ENCODE measurements at regions of chr19 and their contacts with region 1.

Region 1: DNA sequence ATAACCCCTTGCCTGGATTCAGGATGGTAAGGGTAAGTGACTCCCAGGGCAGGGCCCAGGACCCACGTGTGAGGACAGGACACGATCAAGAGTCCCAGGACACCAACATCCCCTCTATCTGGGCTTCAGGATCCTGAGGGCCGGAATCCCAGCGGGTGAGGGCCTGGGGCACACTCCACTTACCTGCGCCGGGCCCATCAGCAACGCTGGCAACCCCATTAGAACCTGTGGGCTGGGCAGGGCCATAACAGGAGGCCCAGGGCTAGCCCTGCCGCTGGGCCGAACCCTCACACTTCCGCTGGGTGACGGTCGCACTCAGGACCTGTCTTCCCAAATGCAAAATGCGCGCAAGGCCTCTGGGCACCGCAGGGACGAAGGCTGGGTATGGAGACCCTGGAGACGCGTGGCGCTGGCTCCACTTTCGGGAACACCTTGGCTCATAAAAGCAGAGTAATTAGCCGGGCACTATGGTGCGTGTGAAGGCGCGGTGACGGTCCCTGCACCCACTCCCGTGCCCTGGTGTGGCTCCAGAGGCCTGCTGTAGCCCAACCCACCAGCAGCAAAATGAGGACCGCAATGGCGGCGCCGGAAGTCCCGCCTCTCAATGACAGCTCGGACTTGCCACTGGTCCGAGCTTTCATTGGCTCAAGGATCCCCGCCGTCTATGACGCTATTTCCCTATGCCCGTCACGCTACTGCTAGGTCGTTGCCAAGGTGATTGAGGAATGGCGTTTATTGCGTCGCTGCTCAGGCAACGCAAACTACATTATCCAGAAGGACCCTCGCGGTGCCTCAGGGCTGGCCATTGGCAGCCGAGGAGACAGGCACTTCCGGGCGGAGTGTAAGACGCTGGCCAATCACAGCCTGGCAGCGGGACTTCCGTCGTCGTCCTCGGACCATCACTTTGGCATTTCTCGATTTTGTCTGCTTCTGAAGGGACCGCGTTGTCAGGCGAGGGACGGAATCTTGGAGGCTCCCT is at the start of gene ZNF132:
- DNase-seq: peak; percentile 99
- H3K4me3 ChIP-seq: peak within 1 kb of the TSS; percentile 52 to 77
- H3K27ac ChIP-seq: peak within 1 kb of the TSS; percentile 53 to 57
- H3K4me1 ChIP-seq: no peaks in the 10 kb centered on the region
- H3K27me3 ChIP-seq: no peaks in the 10 kb centered on the region
- CTCF ChIP-seq: no peak
- POLR2A ChIP-seq: no peak
- total RNA-seq, gene ZNF132: 8.1 to 12.2 TPM

Region 2: GRCh38 chr19:58408152-58409009 is 31.5 kb before region 1 on chr19 and contains the start of gene ZNF584:
- intact Hi-C with region 1: loop called (anchors 2 kb)
- DNase-seq: peak; percentile 94
- H3K4me3 ChIP-seq: peak within 1 kb of the TSS; percentile 93 to 98
- H3K27ac ChIP-seq: peak within 1 kb of the TSS; percentile 82 to 84
- H3K4me1 ChIP-seq: peaks cover 7% of the 10 kb centered on the region
- H3K27me3 ChIP-seq: no peaks in the 10 kb centered on the region
- CTCF ChIP-seq: peak in 1 of 4 experiments; percentile 3
- POLR2A ChIP-seq: peak; percentile 88
- total RNA-seq, gene ZNF584: 10.8 to 19.4 TPM

Region 3: GRCh38 chr19:58475714-58476497 is 36.0 kb after region 1 on chr19 and contains the start of gene ZNF446:
- intact Hi-C with region 1: no loop called
- DNase-seq: peak; percentile 94
- H3K4me3 ChIP-seq: peak within 1 kb of the TSS; percentile 52 to 58
- H3K27ac ChIP-seq: peak within 1 kb of the TSS; percentile 85 to 86
- H3K4me1 ChIP-seq: peaks cover 11% of the 10 kb centered on the region
- H3K27me3 ChIP-seq: no peaks in the 10 kb centered on the region
- CTCF ChIP-seq: peak in 1 of 4 experiments; percentile 13
- POLR2A ChIP-seq: peak; percentile 24
- total RNA-seq, gene ZNF446: 37.8 to 38.0 TPM